ENCODE measurements at regions of chr12 and their contacts with region 1.

Region 1: DNA sequence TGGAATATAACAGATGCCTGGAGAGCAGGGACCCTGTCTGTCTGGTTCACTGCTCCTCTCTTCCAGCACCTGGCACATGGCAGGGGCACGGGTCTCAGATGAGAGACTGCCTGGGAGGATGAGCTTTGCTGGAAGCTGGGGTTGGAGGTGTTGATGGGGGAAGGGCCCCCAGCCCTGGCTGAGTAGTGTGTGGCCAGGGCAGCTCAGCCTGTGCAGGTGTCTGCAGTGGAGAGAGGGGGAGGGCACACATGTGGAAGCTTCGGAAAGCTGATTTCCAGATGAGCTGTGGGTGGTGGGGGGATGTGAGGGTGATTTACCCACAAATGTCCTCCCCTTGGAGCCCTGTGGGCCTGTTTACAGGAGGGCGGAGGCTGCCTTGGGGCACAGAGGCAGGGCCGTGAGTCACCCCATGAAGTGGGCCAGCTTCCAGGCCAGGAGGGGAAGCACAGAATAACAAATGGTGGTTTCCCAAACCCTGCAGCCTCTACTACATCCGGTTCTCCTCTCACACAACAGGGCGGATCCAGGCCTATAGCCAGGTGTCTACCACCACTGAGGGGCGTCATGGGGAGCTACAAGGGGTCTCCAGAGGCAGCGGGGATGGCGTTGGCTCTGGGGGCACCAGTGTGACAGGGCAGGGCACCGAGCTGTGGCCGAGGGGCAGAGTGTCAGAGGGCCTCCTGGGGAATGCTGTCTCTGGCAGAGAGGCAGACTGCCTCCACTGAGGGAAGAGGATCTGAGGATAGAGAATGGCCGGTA is 11.0 kb downstream of the KRT7 start:
- DNase-seq: no peak
- H3K4me3 ChIP-seq: no peak overlapping the region
- H3K27ac ChIP-seq: no peak overlapping the region
- H3K4me1 ChIP-seq: peaks cover 0 to 9% (median 5%) of the 10 kb centered on the region in 4 experiments; a peak in 3 of 7 replicates
- H3K27me3 ChIP-seq: peaks cover 0 to 6% (median 3%) of the 10 kb centered on the region in 4 experiments; a peak in 4 of 7 replicates
- CTCF ChIP-seq: no peak
- EP300 ChIP-seq: no peak
- POLR2A ChIP-seq: no peak
- RAD21 ChIP-seq: no peak

Region 2: DNA sequence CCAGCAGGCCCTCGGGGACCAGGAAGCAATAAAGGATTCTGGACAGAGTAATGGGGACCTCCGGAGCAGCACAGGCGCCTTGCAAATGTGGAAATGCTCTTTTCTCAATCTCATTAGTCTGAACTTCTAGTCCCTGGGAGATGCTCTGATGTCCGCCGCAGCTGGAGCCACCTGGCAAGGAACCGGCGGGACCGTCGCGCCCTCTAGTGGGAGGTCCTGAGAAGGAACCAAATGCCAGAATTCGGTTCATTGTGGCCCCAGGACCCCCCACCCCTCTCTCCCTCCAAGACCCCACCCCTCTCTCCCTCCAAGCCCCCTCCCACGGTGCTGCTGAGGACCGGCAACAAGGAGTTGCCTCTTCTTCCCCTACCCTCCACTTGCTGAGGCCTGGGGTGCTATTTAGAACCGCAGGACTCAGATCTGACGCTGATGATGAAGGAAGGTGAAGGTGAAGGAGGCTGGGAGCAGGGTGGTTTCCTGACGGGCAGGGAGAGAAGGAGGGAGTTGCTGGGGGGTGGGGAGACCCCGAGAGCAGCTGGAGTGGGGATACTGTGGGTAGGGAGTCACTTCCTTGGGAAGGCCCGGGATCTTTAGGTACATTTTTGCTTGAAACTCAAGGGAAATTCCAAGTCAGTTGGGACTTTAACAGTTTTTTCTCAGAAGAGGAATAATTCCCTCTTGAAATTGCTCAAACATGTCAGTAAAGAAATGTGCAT is 122.1 kb before region 1 on chr12:
- CTCF ChIA-PET with region 1: no interaction called
- POLR2A ChIA-PET with region 1: no interaction called
- DNase-seq: peak; percentile 59 to 90
- H3K4me3 ChIP-seq: peak overlapping the region in 2 of 4 experiments; percentile 4 to 51; a peak in 3 of 8 replicates
- H3K27ac ChIP-seq: no peak overlapping the region
- H3K4me1 ChIP-seq: peaks cover 29 to 46% (median 34%) of the 10 kb centered on the region in 4 experiments
- H3K27me3 ChIP-seq: no peaks in the 10 kb centered on the region
- CTCF ChIP-seq: peak; percentile 73 to 83 (median 78)
- EP300 ChIP-seq: 0 out of 3 replicates have a peak, but pooled peaks of 1 of the 2 experiments have one; percentile 28
- POLR2A ChIP-seq: no peak
- RAD21 ChIP-seq: peak; percentile 60 to 74

Region 3: GRCh38 chr12:52230327-52231291 is 13.4 kb before region 1 on chr12:
- CTCF ChIA-PET with region 1: interaction called, 151 read pairs
- POLR2A ChIA-PET with region 1: interaction called, 4 read pairs
- DNase-seq: no peak
- H3K4me3 ChIP-seq: no peak overlapping the region
- H3K27ac ChIP-seq: no peak overlapping the region
- H3K4me1 ChIP-seq: peaks cover 0 to 25% (median 18%) of the 10 kb centered on the region in 4 experiments; a peak in 6 of 7 replicates
- H3K27me3 ChIP-seq: peaks cover 0 to 48% (median 25%) of the 10 kb centered on the region in 4 experiments; a peak in 6 of 7 replicates
- CTCF ChIP-seq: no peak
- EP300 ChIP-seq: peak in 1 of 2 experiments; percentile 91; a peak in 1 of 3 replicates
- POLR2A ChIP-seq: no peak
- RAD21 ChIP-seq: no peak

Region 4: GRCh38 chr12:52313926-52314325 is 69.9 kb after region 1 on chr12:
- CTCF ChIA-PET with region 1: interaction called, 14 read pairs
- POLR2A ChIA-PET with region 1: no interaction called
- DNase-seq: no peak
- H3K4me3 ChIP-seq: no peak overlapping the region
- H3K27ac ChIP-seq: no peak overlapping the region
- H3K4me1 ChIP-seq: no peaks in the 10 kb centered on the region
- H3K27me3 ChIP-seq: peaks cover 5 to 19% (median 10%) of the 10 kb centered on the region in 4 experiments
- CTCF ChIP-seq: no peak
- EP300 ChIP-seq: no peak
- POLR2A ChIP-seq: no peak
- RAD21 ChIP-seq: no peak

Measured in H1 (cell line).